OCI-LY7 (cell line): ENCODE measurements at regions of chr20 and their contacts with region 1.

Region 1: GRCh38 chr20:36460648-36461599 is 80.4 kb upstream of the MYL9 start:
- DNase-seq: peak; percentile 94
- H3K4me3 ChIP-seq: peak overlapping the region; percentile 62
- H3K27ac ChIP-seq: peak overlapping the region; percentile 50
- H3K4me1 ChIP-seq: peaks cover 41% of the 10 kb centered on the region
- CTCF ChIP-seq: no peak

Region 2: GRCh38 chr20:36273414-36274180 is 187.3 kb before region 1 on chr20:
- CTCF ChIA-PET with region 1: no interaction called
- POLR2A ChIA-PET with region 1: no interaction called
- intact Hi-C with region 1: no loop called
- DNase-seq: peak; percentile 49
- H3K4me3 ChIP-seq: no peak overlapping the region
- H3K27ac ChIP-seq: no peak overlapping the region
- H3K4me1 ChIP-seq: no peaks in the 10 kb centered on the region
- CTCF ChIP-seq: peak; percentile 76

Region 3: GRCh38 chr20:36384022-36384619 is 76.8 kb before region 1 on chr20:
- CTCF ChIA-PET with region 1: no interaction called
- POLR2A ChIA-PET with region 1: no interaction called
- intact Hi-C with region 1: no loop called
- DNase-seq: peak; percentile 49
- H3K4me3 ChIP-seq: no peak overlapping the region
- H3K27ac ChIP-seq: no peak overlapping the region
- H3K4me1 ChIP-seq: no peaks in the 10 kb centered on the region
- CTCF ChIP-seq: peak; percentile 55

Region 4: GRCh38 chr20:36573103-36573794 is 112.3 kb after region 1 on chr20 and contains the start of gene TGIF2:
- CTCF ChIA-PET with region 1: no interaction called
- POLR2A ChIA-PET with region 1: no interaction called
- intact Hi-C with region 1: loop called (anchors 5 kb)
- DNase-seq: peak; percentile 95
- H3K4me3 ChIP-seq: peak within 1 kb of the TSS; percentile 88
- H3K27ac ChIP-seq: peak within 1 kb of the TSS; percentile 69
- H3K4me1 ChIP-seq: peaks cover 25% of the 10 kb centered on the region
- CTCF ChIP-seq: no peak
- total RNA-seq, gene TGIF2: 26.6 and 41.3 TPM in 2 replicates

Region 5: DNA sequence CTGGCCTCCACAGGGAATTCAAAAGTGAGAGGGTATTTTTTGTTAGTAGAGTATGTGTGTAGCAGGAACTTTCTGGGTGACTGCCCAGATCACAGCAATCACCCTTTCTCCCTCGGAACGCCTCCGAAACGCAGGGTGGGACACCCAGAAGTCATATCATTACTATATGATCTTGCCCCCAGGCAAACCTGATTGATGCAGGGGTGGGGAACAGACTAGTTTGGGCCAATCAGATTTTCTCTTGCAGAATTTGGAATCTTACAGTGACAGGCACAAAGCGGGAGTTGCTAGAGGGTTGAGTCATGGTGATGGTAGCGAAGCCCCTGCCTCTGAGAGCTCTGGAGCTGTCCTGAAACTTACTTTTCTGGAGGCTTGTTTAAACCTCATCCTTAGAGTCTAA is 701.7 kb after region 1 on chr20:
- CTCF ChIA-PET with region 1: no interaction called
- POLR2A ChIA-PET with region 1: no interaction called
- intact Hi-C with region 1: no loop called
- DNase-seq: no peak
- H3K4me3 ChIP-seq: no peak overlapping the region
- H3K27ac ChIP-seq: no peak overlapping the region
- H3K4me1 ChIP-seq: no peaks in the 10 kb centered on the region
- CTCF ChIP-seq: no peak